ENCODE measurements at regions of chr5 and their contacts with region 1.

Region 1: GRCh38 chr5:14676320-14676719 is 11.8 kb downstream of the OTULIN start:
- DNase-seq: peak; percentile 59
- H3K4me3 Mint-ChIP-seq: peak overlapping the region; percentile 30
- H3K27ac Mint-ChIP-seq: peak overlapping the region; percentile 89
- H3K4me1 Mint-ChIP-seq: peaks cover 75% of the 10 kb centered on the region
- H3K27me3 Mint-ChIP-seq: no peaks in the 10 kb centered on the region

Region 2: GRCh38 chr5:14706615-14707021 is 30.3 kb after region 1 on chr5:
- CTCF ChIA-PET with region 1: interaction called, 5 read pairs
- POLR2A ChIA-PET with region 1: interaction called, 5 read pairs
- intact Hi-C with region 1: loop called (anchors 1 kb)
- DNase-seq: peak; percentile 56
- H3K4me3 Mint-ChIP-seq: peak overlapping the region; percentile 57
- H3K27ac Mint-ChIP-seq: peak overlapping the region; percentile 94
- H3K4me1 Mint-ChIP-seq: peaks cover 74% of the 10 kb centered on the region
- H3K27me3 Mint-ChIP-seq: no peaks in the 10 kb centered on the region

Region 3: GRCh38 chr5:14996997-14997396 is 320.7 kb after region 1 on chr5:
- CTCF ChIA-PET with region 1: no interaction called
- POLR2A ChIA-PET with region 1: interaction called, 3 read pairs
- intact Hi-C with region 1: loop called (anchors 2 kb)
- DNase-seq: no peak
- H3K4me3 Mint-ChIP-seq: no peak overlapping the region
- H3K27ac Mint-ChIP-seq: no peak overlapping the region
- H3K4me1 Mint-ChIP-seq: peaks cover 21% of the 10 kb centered on the region
- H3K27me3 Mint-ChIP-seq: no peaks in the 10 kb centered on the region

Region 4: GRCh38 chr5:16616536-16617273 is 1940.4 kb after region 1 on chr5 and contains the start of gene RETREG1:
- CTCF ChIA-PET with region 1: no interaction called
- POLR2A ChIA-PET with region 1: no interaction called
- intact Hi-C with region 1: loop called (anchors 5 kb)
- DNase-seq: peak; percentile 81
- H3K4me3 Mint-ChIP-seq: peak within 1 kb of the TSS; percentile 95
- H3K27ac Mint-ChIP-seq: peak within 1 kb of the TSS; percentile 83
- H3K4me1 Mint-ChIP-seq: peaks cover 33% of the 10 kb centered on the region
- H3K27me3 Mint-ChIP-seq: no peaks in the 10 kb centered on the region
- total RNA-seq, gene RETREG1: 8.1 to 10.1 TPM